Activated T-helper 2 cell treated with anti-CD3 and anti-CD28 coated beads, Interferon-gamma antibody, Interleukin-2, Interleukin-4, amounts not matched to agents 10 μg/mL and 5 μg/mL and 100 μg/mL, durations not matched to agents 14 hours and 24 hours and 36 hours (primary cell): ENCODE measurements at regions of chr7 and their contacts with region 1.

Region 1: DNA sequence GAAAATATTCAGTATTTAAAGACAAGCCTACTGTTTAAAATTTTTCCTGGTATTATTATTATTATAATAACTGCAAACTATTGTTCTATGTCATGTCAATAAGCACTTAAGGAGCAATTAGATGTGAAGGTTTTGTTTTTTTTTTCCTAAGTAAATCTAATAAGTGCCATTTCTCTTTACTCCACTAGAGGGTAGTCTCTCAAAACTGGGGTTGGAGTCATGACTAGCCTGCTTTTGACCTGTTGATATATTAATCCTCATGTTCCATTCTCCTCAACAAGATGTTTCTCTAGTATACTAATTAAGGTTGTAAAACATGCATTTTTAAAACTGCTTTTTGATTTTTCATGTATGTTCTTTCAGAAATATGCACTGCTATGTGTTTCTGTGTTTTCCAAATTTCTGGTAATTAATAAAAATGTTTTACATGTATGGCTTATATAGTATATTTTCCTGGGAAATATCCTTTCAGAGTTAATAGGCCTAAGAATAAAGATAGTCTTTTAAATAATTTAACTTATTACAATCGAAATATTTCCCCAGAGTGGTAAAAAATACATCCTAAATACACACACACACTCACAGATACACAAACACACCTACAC is 1.0 kb upstream of the LRRN3 start:
- DNase-seq: no peak
- H3K4me3 Mint-ChIP-seq: peak overlapping the region; percentile 97
- H3K27ac Mint-ChIP-seq: no peak overlapping the region
- H3K4me1 Mint-ChIP-seq: peaks cover 73% of the 10 kb centered on the region
- H3K27me3 Mint-ChIP-seq: no peaks in the 10 kb centered on the region

Region 2: GRCh38 chr7:110774063-110774462 is 315.9 kb before region 1 on chr7:
- intact Hi-C with region 1: loop called (anchors 5 kb)
- DNase-seq: no peak
- H3K4me3 Mint-ChIP-seq: no peak overlapping the region
- H3K27ac Mint-ChIP-seq: no peak overlapping the region
- H3K4me1 Mint-ChIP-seq: peaks cover 8% of the 10 kb centered on the region
- H3K27me3 Mint-ChIP-seq: no peaks in the 10 kb centered on the region

Region 3: GRCh38 chr7:110909117-110909516 is 180.8 kb before region 1 on chr7:
- intact Hi-C with region 1: loop called (anchors 5 kb)
- DNase-seq: no peak
- H3K4me3 Mint-ChIP-seq: no peak overlapping the region
- H3K27ac Mint-ChIP-seq: no peak overlapping the region
- H3K4me1 Mint-ChIP-seq: peaks cover 44% of the 10 kb centered on the region
- H3K27me3 Mint-ChIP-seq: no peaks in the 10 kb centered on the region

Region 4: DNA sequence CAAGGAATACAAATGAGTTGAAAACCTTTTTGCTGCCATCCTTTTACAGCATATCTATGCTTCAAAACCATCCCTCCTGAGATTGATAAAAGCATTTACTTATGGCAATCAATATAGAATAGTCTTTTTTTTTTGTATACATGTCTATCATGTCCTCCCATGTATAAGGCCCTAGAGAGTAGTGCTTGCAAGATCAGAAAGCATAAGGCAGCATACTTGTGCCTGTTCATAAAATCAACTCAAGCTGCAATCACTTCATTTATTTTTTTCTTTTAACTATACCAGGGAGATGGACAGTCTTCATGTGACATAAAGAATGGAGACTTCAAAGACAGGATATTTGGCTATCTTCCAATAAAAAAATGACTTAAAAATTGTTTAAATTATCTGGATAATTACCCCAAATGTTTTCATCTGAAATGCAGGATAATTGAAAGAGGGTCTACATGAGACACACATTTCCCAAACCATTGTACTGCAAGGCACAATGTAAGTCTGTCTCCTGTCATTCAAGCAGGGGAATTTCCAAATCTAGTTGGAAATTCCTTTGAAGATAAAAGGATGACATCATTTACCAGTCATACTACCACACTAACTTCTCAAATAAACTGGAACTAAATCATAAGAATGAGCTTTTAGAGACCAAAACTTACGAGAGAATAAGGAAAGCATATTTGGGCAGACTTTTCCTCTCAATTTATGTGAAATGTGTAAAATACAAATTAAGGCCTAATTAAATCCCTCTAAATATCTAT is 23.5 kb after region 1 on chr7:
- intact Hi-C with region 1: loop called (anchors 2 kb)
- DNase-seq: no peak
- H3K4me3 Mint-ChIP-seq: no peak overlapping the region
- H3K27ac Mint-ChIP-seq: peak overlapping the region; percentile 88
- H3K4me1 Mint-ChIP-seq: peaks cover 40% of the 10 kb centered on the region
- H3K27me3 Mint-ChIP-seq: no peaks in the 10 kb centered on the region

Region 5: GRCh38 chr7:111232249-111233084 is 142.5 kb after region 1 on chr7:
- intact Hi-C with region 1: loop called (anchors 5 kb)
- DNase-seq: no peak
- H3K4me3 Mint-ChIP-seq: no peak overlapping the region
- H3K27ac Mint-ChIP-seq: no peak overlapping the region
- H3K4me1 Mint-ChIP-seq: peaks cover 20% of the 10 kb centered on the region
- H3K27me3 Mint-ChIP-seq: no peaks in the 10 kb centered on the region

Region 6: GRCh38 chr7:111486472-111487142 is 396.7 kb after region 1 on chr7:
- intact Hi-C with region 1: loop called (anchors 5 kb)
- DNase-seq: no peak
- H3K4me3 Mint-ChIP-seq: no peak overlapping the region
- H3K27ac Mint-ChIP-seq: no peak overlapping the region
- H3K4me1 Mint-ChIP-seq: no peaks in the 10 kb centered on the region
- H3K27me3 Mint-ChIP-seq: no peaks in the 10 kb centered on the region